ENCODE measurements at regions of chr5 and their contacts with region 1.

Region 1: GRCh38 chr5:76867827-76868693 is 18.2 kb downstream of the S100Z start:
- DNase-seq: peak; percentile 74
- H3K4me3 Mint-ChIP-seq: no peak overlapping the region
- H3K27ac Mint-ChIP-seq: no peak overlapping the region
- H3K4me1 Mint-ChIP-seq: no peaks in the 10 kb centered on the region
- H3K27me3 Mint-ChIP-seq: no peaks in the 10 kb centered on the region

Region 2: GRCh38 chr5:76908166-76908565 is 40.1 kb after region 1 on chr5:
- CTCF ChIA-PET with region 1: no interaction called
- POLR2A ChIA-PET with region 1: no interaction called
- intact Hi-C with region 1: no loop called
- DNase-seq: no peak
- H3K4me3 Mint-ChIP-seq: no peak overlapping the region
- H3K27ac Mint-ChIP-seq: no peak overlapping the region
- H3K4me1 Mint-ChIP-seq: no peaks in the 10 kb centered on the region
- H3K27me3 Mint-ChIP-seq: no peaks in the 10 kb centered on the region

Region 3: DNA sequence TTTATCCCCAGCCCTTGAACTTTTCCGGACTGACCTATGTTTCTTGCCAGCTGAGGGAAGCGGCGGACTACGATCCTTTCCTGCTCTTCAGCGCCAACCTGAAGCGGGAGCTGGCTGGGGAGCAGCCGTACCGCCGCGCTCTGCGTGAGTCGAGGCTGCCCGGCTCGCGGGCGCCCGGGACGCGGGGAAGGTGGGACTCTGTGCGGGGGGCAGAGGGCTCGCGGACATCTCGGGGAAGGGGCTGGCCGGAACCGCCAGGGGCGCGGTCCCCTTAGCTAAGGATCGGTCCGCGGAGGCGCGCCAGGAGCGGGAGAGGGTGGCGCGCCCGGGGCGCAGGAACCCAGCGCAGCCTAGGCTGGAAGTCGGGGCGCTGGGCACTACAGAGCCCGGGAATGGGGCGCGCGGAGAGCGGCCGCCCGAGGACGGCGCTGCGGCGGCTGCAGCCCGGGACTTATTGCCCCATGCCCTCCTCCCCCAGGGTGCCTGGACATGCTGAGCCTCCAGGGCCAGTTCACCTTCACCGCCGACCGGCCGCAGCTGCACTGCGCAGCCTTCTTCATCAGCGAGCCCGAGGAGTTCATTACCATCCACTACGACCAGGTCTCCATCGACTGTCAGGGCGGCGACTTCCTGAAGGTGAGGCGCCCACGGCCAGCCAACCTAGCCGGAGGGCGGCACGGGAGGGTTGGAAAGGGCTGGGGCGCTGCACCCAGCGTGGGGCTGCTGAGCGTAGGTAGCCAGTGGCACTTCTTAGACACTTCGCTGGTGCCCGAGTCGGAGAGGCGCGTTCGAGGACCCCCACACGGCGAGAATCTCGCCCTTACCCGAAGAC is 85.7 kb after region 1 on chr5:
- CTCF ChIA-PET with region 1: no interaction called
- POLR2A ChIA-PET with region 1: no interaction called
- intact Hi-C with region 1: no loop called
- DNase-seq: no peak
- H3K4me3 Mint-ChIP-seq: no peak overlapping the region
- H3K27ac Mint-ChIP-seq: no peak overlapping the region
- H3K4me1 Mint-ChIP-seq: peaks cover 8% of the 10 kb centered on the region
- H3K27me3 Mint-ChIP-seq: peaks cover 37% of the 10 kb centered on the region

Region 4: GRCh38 chr5:77015938-77016569 is 148.0 kb after region 1 on chr5:
- CTCF ChIA-PET with region 1: interaction called, 6 read pairs
- POLR2A ChIA-PET with region 1: no interaction called
- intact Hi-C with region 1: loop called (anchors 1 kb)
- DNase-seq: no peak
- H3K4me3 Mint-ChIP-seq: no peak overlapping the region
- H3K27ac Mint-ChIP-seq: no peak overlapping the region
- H3K4me1 Mint-ChIP-seq: peaks cover 7% of the 10 kb centered on the region
- H3K27me3 Mint-ChIP-seq: peaks cover 7% of the 10 kb centered on the region

Region 5: GRCh38 chr5:77301447-77301883 is 433.4 kb after region 1 on chr5:
- CTCF ChIA-PET with region 1: no interaction called
- POLR2A ChIA-PET with region 1: no interaction called
- intact Hi-C with region 1: no loop called
- DNase-seq: no peak
- H3K4me3 Mint-ChIP-seq: no peak overlapping the region
- H3K27ac Mint-ChIP-seq: no peak overlapping the region
- H3K4me1 Mint-ChIP-seq: no peaks in the 10 kb centered on the region
- H3K27me3 Mint-ChIP-seq: no peaks in the 10 kb centered on the region

Measured in activated CD4-positive, alpha-beta memory T cell treated with anti-CD3 and anti-CD28 coated beads for 36 hours (primary cell).